Caco-2 (cell line): ENCODE measurements at regions of chr14 and their contacts with region 1.

Region 1: GRCh38 chr14:34461334-34462131 is 507 bp downstream of the SPTSSA start:
- DNase-seq: peak; percentile 66 to 78
- H3K4me3 ChIP-seq: peak overlapping the region; percentile 45
- H3K4me3 Mint-ChIP-seq: peak overlapping the region; percentile 73
- H3K27ac Mint-ChIP-seq: peak overlapping the region; percentile 51
- H3K4me1 ChIP-seq: peaks cover 11% of the 10 kb centered on the region
- H3K4me1 Mint-ChIP-seq: no peaks in the 10 kb centered on the region
- H3K27me3 ChIP-seq: no peaks in the 10 kb centered on the region
- H3K27me3 Mint-ChIP-seq: no peaks in the 10 kb centered on the region
- CTCF ChIP-seq: no peak

Region 2: GRCh38 chr14:34436118-34436880 is 25.2 kb before region 1 on chr14:
- CTCF ChIA-PET with region 1: no interaction called
- POLR2A ChIA-PET with region 1: interaction called, 7 read pairs
- intact Hi-C with region 1: loop called (anchors 2 kb)
- DNase-seq: peak in 1 of 2 experiments; percentile 35
- H3K4me3 ChIP-seq: no peak overlapping the region
- H3K4me3 Mint-ChIP-seq: no peak overlapping the region
- H3K27ac Mint-ChIP-seq: peak overlapping the region; percentile 10
- H3K4me1 ChIP-seq: peaks cover 28% of the 10 kb centered on the region
- H3K4me1 Mint-ChIP-seq: peaks cover 23% of the 10 kb centered on the region
- H3K27me3 ChIP-seq: no peaks in the 10 kb centered on the region
- H3K27me3 Mint-ChIP-seq: no peaks in the 10 kb centered on the region
- CTCF ChIP-seq: no peak

Region 3: DNA sequence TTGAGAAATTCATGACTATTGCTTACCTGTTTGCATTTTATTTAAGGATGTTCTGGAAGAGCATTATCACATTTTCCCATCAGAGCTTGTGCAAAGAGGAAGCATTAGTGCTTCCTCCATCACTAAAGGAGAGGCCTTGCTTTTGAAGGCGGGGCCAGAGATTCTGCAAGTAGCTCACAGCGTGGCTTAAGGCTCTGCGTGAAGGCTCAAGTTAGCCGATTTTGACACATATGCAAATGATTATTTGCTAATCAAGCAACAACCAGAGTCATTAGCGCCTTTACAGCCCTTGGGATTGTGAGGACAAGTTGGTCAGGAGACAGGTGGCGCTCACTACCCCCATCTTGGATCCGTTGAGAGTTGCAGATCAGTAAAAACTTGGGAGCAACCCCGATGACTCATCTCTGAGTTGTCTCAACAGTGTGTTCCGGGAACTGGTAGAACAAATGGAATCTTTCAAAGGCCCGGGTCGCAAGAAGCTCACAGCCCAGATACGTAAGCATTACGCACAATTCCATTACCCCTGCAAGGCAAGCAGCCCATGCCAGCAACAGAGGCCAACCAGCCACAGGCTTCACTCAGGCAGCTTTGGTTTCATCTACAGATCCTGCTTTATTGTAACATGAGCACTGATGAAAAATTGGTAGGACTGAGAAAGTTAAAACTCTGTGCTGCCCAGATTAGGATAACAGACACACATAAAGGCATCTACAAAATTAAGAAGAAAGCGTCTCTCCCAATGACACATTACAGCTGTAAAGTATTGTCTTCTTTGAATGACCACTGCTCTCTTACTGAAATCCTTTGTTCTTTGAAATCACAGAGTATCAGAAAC is 35.4 kb after region 1 on chr14:
- CTCF ChIA-PET with region 1: no interaction called
- POLR2A ChIA-PET with region 1: interaction called, 6 read pairs
- intact Hi-C with region 1: loop called (anchors 2 kb)
- DNase-seq: peak; percentile 72 to 81
- H3K4me3 ChIP-seq: no peak overlapping the region
- H3K4me3 Mint-ChIP-seq: peak overlapping the region; percentile 61
- H3K27ac Mint-ChIP-seq: peak overlapping the region; percentile 91
- H3K4me1 ChIP-seq: peaks cover 23% of the 10 kb centered on the region
- H3K4me1 Mint-ChIP-seq: no peaks in the 10 kb centered on the region
- H3K27me3 ChIP-seq: no peaks in the 10 kb centered on the region
- H3K27me3 Mint-ChIP-seq: no peaks in the 10 kb centered on the region
- CTCF ChIP-seq: peak; percentile 23 to 46

Region 4: GRCh38 chr14:34539407-34540180 is 78.1 kb after region 1 on chr14 and contains the start of gene EAPP:
- CTCF ChIA-PET with region 1: no interaction called
- POLR2A ChIA-PET with region 1: no interaction called
- intact Hi-C with region 1: loop called (anchors 5 kb)
- DNase-seq: peak; percentile 97 to 99
- H3K4me3 ChIP-seq: peak within 1 kb of the TSS; percentile 68
- H3K4me3 Mint-ChIP-seq: peak within 1 kb of the TSS; percentile 98
- H3K27ac Mint-ChIP-seq: peak within 1 kb of the TSS; percentile 92
- H3K4me1 ChIP-seq: peaks cover 24% of the 10 kb centered on the region
- H3K4me1 Mint-ChIP-seq: peaks cover 6% of the 10 kb centered on the region
- H3K27me3 ChIP-seq: no peaks in the 10 kb centered on the region
- H3K27me3 Mint-ChIP-seq: no peaks in the 10 kb centered on the region
- CTCF ChIP-seq: no peak
- total RNA-seq, gene EAPP: 26.8 and 30.7 TPM in 2 replicates